ENCODE measurements at regions of chr21 and their contacts with region 1.

Region 1: GRCh38 chr21:31282095-31282709 is 61.9 kb downstream of the TIAM1 start:
- DNase-seq: peak; percentile 34
- H3K4me3 ChIP-seq: no peak overlapping the region
- H3K27ac ChIP-seq: no peak overlapping the region
- H3K4me1 ChIP-seq: peaks cover 4% of the 10 kb centered on the region
- H3K27me3 ChIP-seq: no peaks in the 10 kb centered on the region
- CTCF ChIP-seq: no peak

Region 2: DNA sequence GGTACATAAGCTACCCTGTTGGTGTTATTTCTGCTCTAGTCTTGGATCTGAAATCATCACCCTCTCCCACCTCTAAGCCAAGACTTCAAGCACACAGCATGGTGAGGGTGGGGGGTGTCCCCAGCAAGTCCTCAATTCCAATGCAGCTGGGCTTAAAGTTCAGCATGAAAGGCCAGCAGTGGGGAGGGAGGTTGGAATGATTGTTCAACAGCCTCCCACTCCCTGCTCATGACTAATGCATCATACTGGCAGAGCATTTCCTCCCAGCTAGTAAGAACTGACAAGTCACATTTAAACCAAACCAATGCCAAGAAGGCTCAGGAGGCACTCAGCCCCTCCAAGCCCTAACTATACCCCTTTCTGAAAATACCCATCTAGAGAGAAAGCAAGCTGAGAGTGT is 11.8 kb after region 1 on chr21:
- CTCF ChIA-PET with region 1: interaction called, 14 read pairs
- dilution Hi-C with region 1: no loop called
- in situ Hi-C with region 1: no loop called
- intact Hi-C with region 1: no loop called
- DNase-seq: peak; percentile 74
- H3K4me3 ChIP-seq: no peak overlapping the region
- H3K27ac ChIP-seq: peak overlapping the region; percentile 48
- H3K4me1 ChIP-seq: peaks cover 15% of the 10 kb centered on the region
- H3K27me3 ChIP-seq: no peaks in the 10 kb centered on the region
- CTCF ChIP-seq: no peak

Region 3: GRCh38 chr21:31382060-31382459 is 99.9 kb after region 1 on chr21:
- CTCF ChIA-PET with region 1: no interaction called
- dilution Hi-C with region 1: loop called (anchors 5 kb)
- in situ Hi-C with region 1: no loop called
- intact Hi-C with region 1: no loop called
- DNase-seq: no peak
- H3K4me3 ChIP-seq: no peak overlapping the region
- H3K27ac ChIP-seq: no peak overlapping the region
- H3K4me1 ChIP-seq: no peaks in the 10 kb centered on the region
- H3K27me3 ChIP-seq: no peaks in the 10 kb centered on the region
- CTCF ChIP-seq: no peak

Region 4: GRCh38 chr21:31798842-31799704 is 516.9 kb after region 1 on chr21:
- CTCF ChIA-PET with region 1: no interaction called
- dilution Hi-C with region 1: no loop called
- in situ Hi-C with region 1: no loop called
- intact Hi-C with region 1: no loop called
- DNase-seq: peak; percentile 48
- H3K4me3 ChIP-seq: no peak overlapping the region
- H3K27ac ChIP-seq: no peak overlapping the region
- H3K4me1 ChIP-seq: peaks cover 4% of the 10 kb centered on the region
- H3K27me3 ChIP-seq: no peaks in the 10 kb centered on the region
- CTCF ChIP-seq: no peak